Activated CD4-positive, alpha-beta T cell treated with anti-CD3 and anti-CD28 coated beads for 36 hours (primary cell): ENCODE measurements at regions of chr3 and their contacts with region 1.

Region 1: DNA sequence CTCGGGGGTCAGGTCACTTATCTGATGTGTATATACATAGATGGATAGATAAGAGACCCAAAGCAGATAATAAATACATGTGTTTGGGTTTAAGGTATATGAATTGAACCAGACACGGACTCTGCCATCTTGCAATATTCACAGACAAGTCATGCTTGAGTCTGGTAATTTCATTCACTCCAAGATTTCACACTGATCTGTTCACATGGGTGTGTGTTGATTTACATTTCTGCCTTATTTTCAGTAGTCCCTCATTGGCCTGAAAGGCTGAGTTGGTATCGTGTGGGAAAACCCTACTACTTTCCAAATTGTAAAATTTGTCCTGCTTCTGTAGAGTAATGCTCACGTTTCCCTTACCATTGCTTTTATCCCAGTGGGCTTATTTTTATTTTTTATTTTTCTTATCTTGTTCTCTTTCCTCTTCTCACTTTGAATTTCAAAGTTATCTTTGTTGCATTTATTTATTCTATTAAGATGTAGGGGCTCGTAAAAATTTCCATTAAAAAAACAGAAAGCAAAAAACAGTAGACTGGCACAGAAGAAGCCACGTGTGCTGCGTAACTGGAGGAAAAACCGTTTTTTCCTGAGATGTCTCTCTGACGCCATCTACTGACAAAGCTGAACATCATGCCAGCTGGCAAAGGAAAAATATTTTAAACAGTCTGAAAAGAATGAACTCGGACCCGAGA is 10.8 kb upstream of the MFSD1 start:
- DNase-seq: peak; percentile 48
- ATAC-seq: peak; percentile 74
- H3K4me3 Mint-ChIP-seq: peak overlapping the region; percentile 45
- H3K27ac Mint-ChIP-seq: peak overlapping the region; percentile 29
- H3K4me1 Mint-ChIP-seq: peaks cover 5% of the 10 kb centered on the region
- H3K27me3 Mint-ChIP-seq: no peaks in the 10 kb centered on the region

Region 2: GRCh38 chr3:157606011-157606851 is 1184.8 kb before region 1 on chr3:
- CTCF ChIA-PET with region 1: no interaction called
- POLR2A ChIA-PET with region 1: no interaction called
- intact Hi-C with region 1: loop called in 1 of 2 experiments (anchors 1 kb)
- DNase-seq: peak; percentile 82
- ATAC-seq: peak; percentile 94
- H3K4me3 Mint-ChIP-seq: no peak overlapping the region
- H3K27ac Mint-ChIP-seq: no peak overlapping the region
- H3K4me1 Mint-ChIP-seq: peaks cover 5% of the 10 kb centered on the region
- H3K27me3 Mint-ChIP-seq: peaks cover 13% of the 10 kb centered on the region

Region 3: DNA sequence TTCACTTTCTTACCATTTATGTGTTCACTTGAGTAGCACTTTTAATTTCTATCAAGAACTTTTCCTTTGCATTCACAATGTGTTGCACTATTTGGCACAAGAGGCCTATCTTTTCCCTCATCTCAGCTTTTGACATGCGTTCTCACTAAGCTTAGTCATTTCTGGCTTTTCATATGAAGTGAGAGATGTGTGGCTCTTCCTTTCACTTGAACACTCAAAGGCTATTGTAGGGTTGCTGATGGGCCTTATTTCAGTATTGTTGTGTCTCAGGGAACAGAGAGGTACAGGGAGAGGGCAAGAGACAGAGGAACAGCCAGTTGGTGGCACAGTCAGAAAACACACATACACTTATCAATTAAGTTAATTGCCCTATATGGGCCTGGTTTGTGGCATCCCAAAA is 347.4 kb before region 1 on chr3:
- CTCF ChIA-PET with region 1: no interaction called
- POLR2A ChIA-PET with region 1: no interaction called
- intact Hi-C with region 1: no loop called
- DNase-seq: peak; percentile 9
- ATAC-seq: peak; percentile 96
- H3K4me3 Mint-ChIP-seq: no peak overlapping the region
- H3K27ac Mint-ChIP-seq: peak overlapping the region; percentile 63
- H3K4me1 Mint-ChIP-seq: peaks cover 11% of the 10 kb centered on the region
- H3K27me3 Mint-ChIP-seq: no peaks in the 10 kb centered on the region

Region 4: DNA sequence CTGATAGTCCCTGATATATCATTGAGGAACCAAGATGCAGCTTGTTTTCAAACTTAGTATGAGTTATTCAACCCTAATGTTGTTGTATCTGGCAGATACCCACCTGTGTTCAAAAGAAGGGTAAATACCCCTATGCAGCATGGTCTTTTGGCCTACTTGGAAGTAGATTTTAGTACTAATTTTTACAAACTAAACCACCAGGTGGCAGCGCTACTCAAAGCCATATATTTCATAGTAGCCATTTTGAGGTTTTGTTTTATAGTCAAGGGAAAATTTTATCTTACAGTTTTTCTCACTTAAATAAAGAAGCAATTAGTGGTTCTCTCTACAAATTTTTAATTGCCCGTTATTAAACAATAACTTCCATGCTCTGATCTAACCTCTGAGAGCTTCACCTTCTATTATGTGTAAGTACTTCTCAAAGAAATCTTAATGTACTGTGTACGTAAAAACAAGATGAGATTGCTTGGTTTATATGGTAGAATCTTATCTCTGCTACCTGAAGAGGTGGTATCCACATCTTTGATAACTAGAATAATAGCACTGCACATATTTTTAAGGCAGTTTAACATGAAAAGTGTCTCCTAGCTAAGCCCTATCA is 251.5 kb before region 1 on chr3:
- CTCF ChIA-PET with region 1: interaction called, 11 read pairs
- POLR2A ChIA-PET with region 1: no interaction called
- intact Hi-C with region 1: loop called (anchors 1 kb)
- DNase-seq: peak; percentile 65
- ATAC-seq: peak; percentile 57
- H3K4me3 Mint-ChIP-seq: no peak overlapping the region
- H3K27ac Mint-ChIP-seq: no peak overlapping the region
- H3K4me1 Mint-ChIP-seq: no peaks in the 10 kb centered on the region
- H3K27me3 Mint-ChIP-seq: no peaks in the 10 kb centered on the region

Region 5: DNA sequence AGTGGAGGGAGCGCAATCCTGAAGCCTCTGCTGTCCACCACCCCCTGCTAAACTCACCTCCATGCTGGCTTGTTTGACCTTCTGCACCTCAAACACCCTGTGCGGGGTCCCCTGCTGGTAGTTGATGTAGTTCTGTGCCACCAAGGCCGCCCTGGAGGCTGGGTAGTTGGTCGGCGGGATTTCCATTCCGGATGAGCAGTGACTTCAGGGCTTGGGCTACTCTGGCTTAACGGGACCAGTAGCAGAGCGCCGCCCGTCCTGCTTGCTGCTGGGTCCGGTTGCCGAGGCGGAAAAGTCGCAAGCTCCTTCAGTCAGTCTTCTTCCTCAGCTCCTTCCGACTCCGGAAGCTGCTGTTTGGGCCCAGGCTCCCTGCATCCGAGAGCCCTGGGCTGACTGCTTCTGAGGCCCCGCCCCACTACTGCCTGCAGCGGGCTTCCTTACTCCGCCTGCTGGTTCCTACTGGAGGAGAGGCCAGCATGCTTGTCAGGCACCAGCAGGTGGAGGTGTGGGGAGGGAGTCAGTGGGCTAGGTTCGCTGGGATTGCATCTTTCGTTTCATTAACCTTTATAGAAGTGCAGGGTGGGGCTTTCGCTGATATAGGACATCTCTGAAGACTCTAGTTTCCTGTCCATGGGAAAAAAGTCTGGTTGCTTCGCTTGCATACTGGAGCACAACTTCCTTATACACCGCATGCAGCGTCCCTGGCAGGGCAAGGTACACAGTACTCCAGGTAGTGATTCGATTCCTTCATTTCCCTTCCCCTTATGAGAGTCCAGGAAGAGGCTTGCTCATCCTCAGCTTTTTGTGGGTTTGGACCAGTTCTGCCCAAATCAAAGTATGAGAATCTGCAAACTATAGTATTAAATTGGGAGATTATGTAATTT is 118.5 kb before region 1 on chr3 and contains the start of gene LXN:
- CTCF ChIA-PET with region 1: interaction called, 6 read pairs
- POLR2A ChIA-PET with region 1: no interaction called
- intact Hi-C with region 1: loop called in 1 of 2 experiments (anchors 5 kb)
- DNase-seq: peak; percentile 92
- ATAC-seq: peak; percentile 100
- H3K4me3 Mint-ChIP-seq: peak within 1 kb of the TSS; percentile 85
- H3K27ac Mint-ChIP-seq: peak within 1 kb of the TSS; percentile 91
- H3K4me1 Mint-ChIP-seq: peaks cover 18% of the 10 kb centered on the region
- H3K27me3 Mint-ChIP-seq: no peaks in the 10 kb centered on the region
- total RNA-seq, gene LXN: 12.5 to 13.9 TPM

Region 6: GRCh38 chr3:158727206-158728060 is 63.6 kb before region 1 on chr3:
- CTCF ChIA-PET with region 1: interaction called, 114 read pairs
- POLR2A ChIA-PET with region 1: interaction called, 6 read pairs
- intact Hi-C with region 1: loop called (anchors 1 kb)
- DNase-seq: peak; percentile 63
- ATAC-seq: no peak
- H3K4me3 Mint-ChIP-seq: no peak overlapping the region
- H3K27ac Mint-ChIP-seq: no peak overlapping the region
- H3K4me1 Mint-ChIP-seq: peaks cover 29% of the 10 kb centered on the region
- H3K27me3 Mint-ChIP-seq: peaks cover 3% of the 10 kb centered on the region

Region 7: DNA sequence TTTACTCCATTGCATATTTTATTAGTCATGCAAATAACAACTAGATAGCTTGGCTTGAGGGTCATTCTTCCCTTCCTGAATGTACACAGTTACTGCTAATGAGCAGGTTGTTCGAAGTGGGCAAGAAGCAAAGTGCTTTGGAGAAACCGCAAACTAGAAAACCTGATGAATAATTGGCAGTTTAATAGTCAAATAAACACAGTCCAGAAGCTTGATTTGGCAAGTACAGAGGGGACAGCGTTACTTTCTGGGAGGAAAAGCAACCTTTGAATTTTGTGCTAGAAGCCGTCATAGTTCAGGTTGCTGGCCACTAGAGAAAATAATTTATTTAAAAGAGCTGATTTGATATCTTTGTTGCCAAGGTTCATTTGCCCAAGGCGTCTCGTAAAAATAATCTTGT is 105.7 kb after region 1 on chr3:
- CTCF ChIA-PET with region 1: no interaction called
- POLR2A ChIA-PET with region 1: no interaction called
- intact Hi-C with region 1: no loop called
- DNase-seq: no peak
- ATAC-seq: no peak
- H3K4me3 Mint-ChIP-seq: no peak overlapping the region
- H3K27ac Mint-ChIP-seq: no peak overlapping the region
- H3K4me1 Mint-ChIP-seq: no peaks in the 10 kb centered on the region
- H3K27me3 Mint-ChIP-seq: no peaks in the 10 kb centered on the region

Region 8: GRCh38 chr3:159091936-159092335 is 300.9 kb after region 1 on chr3:
- CTCF ChIA-PET with region 1: no interaction called
- POLR2A ChIA-PET with region 1: no interaction called
- intact Hi-C with region 1: no loop called
- DNase-seq: no peak
- ATAC-seq: no peak
- H3K4me3 Mint-ChIP-seq: no peak overlapping the region
- H3K27ac Mint-ChIP-seq: no peak overlapping the region
- H3K4me1 Mint-ChIP-seq: no peaks in the 10 kb centered on the region
- H3K27me3 Mint-ChIP-seq: no peaks in the 10 kb centered on the region

Region 9: GRCh38 chr3:159252772-159253384 is 461.8 kb after region 1 on chr3:
- CTCF ChIA-PET with region 1: interaction called, 4 read pairs
- POLR2A ChIA-PET with region 1: no interaction called
- intact Hi-C with region 1: loop called in 1 of 2 experiments (anchors 2 kb)
- DNase-seq: no peak
- ATAC-seq: no peak
- H3K4me3 Mint-ChIP-seq: no peak overlapping the region
- H3K27ac Mint-ChIP-seq: no peak overlapping the region
- H3K4me1 Mint-ChIP-seq: no peaks in the 10 kb centered on the region
- H3K27me3 Mint-ChIP-seq: peaks cover 8% of the 10 kb centered on the region